H1 (cell line): ENCODE measurements at regions of chr5 and their contacts with region 1.

Region 1: DNA sequence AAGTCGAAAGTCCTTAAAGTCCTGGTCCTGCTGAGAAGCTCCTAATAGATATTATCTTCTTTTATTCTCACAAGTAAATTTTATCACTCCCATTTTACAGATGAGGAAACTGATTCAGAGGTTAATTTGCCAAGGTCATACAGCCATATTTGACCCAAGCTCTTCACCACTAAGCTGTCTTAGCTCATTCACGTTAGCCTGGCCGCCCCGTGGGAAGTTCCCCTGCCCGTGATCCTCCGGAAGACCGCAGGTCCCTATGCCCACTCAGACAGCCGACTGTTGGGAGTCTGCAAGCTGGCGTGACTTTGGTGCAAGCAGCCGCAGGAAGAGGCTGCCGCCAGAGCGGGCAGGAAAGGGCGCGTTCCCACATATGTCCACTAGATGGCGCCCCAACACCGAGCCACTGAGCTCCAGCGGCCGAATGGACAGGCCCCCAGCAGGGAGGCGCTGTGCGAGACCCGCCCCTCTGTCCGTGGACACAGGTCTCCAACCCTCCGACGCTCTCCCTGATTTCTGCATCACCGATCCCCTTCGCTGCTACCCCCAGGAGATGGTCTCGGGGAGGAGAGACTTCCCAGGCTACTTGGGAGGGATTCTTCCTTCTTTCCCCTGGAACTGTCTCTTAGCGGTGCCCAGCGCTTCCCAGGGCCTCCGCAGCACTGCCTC is 10.0 kb upstream of the ARAP3 start:
- DNase-seq: peak in 1 of 2 experiments; percentile 98
- H3K4me3 ChIP-seq: peak overlapping the region; percentile 19 to 60 (median 54); a peak in 7 of 8 replicates
- H3K27ac ChIP-seq: no peak overlapping the region
- H3K4me1 ChIP-seq: peaks cover 4 to 13% (median 9%) of the 10 kb centered on the region in 4 experiments
- H3K27me3 ChIP-seq: peaks cover 0 to 11% (median 2%) of the 10 kb centered on the region in 4 experiments; a peak in 2 of 7 replicates
- CTCF ChIP-seq: peak; percentile 95 to 99 (median 97)
- EP300 ChIP-seq: no peak
- POLR2A ChIP-seq: no peak
- RAD21 ChIP-seq: peak; percentile 98 to 99

Region 2: GRCh38 chr5:141208478-141208877 is 483.5 kb before region 1 on chr5 and contains the start of gene PCDHB12:
- CTCF ChIA-PET with region 1: no interaction called
- POLR2A ChIA-PET with region 1: no interaction called
- DNase-seq: no peak
- H3K4me3 ChIP-seq: peak within 1 kb of the TSS in 2 of 4 experiments; percentile 10 to 34; a peak in 2 of 8 replicates
- H3K27ac ChIP-seq: no peak within 1 kb of the TSS
- H3K4me1 ChIP-seq: no peaks in the 10 kb centered on the region
- H3K27me3 ChIP-seq: no peaks in the 10 kb centered on the region
- CTCF ChIP-seq: peak in 2 of 3 experiments; percentile 11 to 48; a peak in 3 of 4 replicates
- EP300 ChIP-seq: no peak
- POLR2A ChIP-seq: no peak
- RAD21 ChIP-seq: peak; percentile 42 to 45
- total RNA-seq, gene PCDHB12: 2.0 and 3.0 TPM in 2 replicates

Region 3: GRCh38 chr5:141664732-141665461 is 27.1 kb before region 1 on chr5:
- CTCF ChIA-PET with region 1: interaction called, 137 read pairs
- POLR2A ChIA-PET with region 1: interaction called, 3 read pairs
- DNase-seq: peak; percentile 66 to 94
- H3K4me3 ChIP-seq: no peak overlapping the region
- H3K27ac ChIP-seq: no peak overlapping the region
- H3K4me1 ChIP-seq: no peaks in the 10 kb centered on the region
- H3K27me3 ChIP-seq: no peaks in the 10 kb centered on the region
- CTCF ChIP-seq: peak; percentile 91 to 96 (median 91)
- EP300 ChIP-seq: no peak
- POLR2A ChIP-seq: no peak
- RAD21 ChIP-seq: peak; percentile 90 to 95

Region 4: DNA sequence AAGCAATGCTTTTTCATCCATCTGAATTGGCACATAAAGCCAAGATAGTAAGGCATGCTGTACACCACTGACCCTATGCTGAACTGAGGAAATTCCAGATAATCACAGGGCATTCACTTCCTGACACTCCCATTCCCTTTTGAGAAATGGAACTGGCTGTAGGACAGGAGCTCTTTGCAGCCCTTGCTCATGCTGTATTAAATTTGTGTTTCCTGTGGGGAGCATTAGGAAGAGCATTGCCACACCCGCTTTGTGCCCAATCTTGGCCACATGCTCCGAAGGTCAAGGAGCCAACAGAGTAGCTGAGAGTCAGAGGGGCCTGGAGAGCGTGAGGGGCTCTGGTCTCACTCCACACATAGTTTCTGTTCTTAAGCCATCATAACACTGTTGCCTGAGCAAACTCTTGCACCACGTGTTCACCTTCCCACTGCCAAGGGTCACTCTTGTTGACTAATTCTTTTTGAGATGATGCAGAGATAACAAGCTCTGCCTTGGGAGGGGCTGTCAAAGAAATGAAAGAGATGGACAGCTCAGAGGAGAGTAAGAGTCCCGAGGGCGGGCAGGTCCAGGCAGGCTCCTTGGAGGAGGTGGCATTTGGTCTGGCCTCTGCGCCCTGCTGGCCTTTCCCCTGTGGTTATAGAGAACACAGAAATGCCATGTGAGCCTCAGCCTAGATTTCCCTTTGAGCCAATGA is 21.8 kb after region 1 on chr5:
- CTCF ChIA-PET with region 1: interaction called, 25 read pairs
- POLR2A ChIA-PET with region 1: no interaction called
- DNase-seq: no peak
- H3K4me3 ChIP-seq: no peak overlapping the region
- H3K27ac ChIP-seq: no peak overlapping the region
- H3K4me1 ChIP-seq: peaks cover 3 to 20% (median 11%) of the 10 kb centered on the region in 4 experiments
- H3K27me3 ChIP-seq: no peaks in the 10 kb centered on the region
- CTCF ChIP-seq: no peak
- EP300 ChIP-seq: no peak
- POLR2A ChIP-seq: no peak
- RAD21 ChIP-seq: no peak

Region 5: DNA sequence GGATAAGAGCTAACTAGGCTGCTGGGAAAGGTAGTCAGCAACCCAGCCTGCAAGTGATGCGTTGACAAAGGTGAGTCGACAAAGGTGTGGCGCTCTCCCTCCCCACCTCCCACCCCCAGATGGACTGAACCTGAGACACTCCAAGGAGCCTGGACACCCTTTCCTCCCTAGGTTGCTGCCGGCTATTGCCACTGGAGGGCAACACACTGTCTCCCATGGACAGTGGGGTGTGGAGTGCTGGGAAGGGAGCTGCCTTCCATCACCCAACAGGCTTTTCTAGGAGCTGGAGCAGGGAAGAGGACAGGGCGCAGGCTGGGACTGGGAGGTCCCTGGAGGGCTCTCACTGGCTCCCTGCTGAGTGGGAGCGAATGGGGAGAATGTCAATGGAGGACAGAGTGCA is 65.4 kb after region 1 on chr5:
- CTCF ChIA-PET with region 1: interaction called, 98 read pairs
- POLR2A ChIA-PET with region 1: interaction called, 6 read pairs
- DNase-seq: peak in 1 of 2 experiments; percentile 29
- H3K4me3 ChIP-seq: no peak overlapping the region
- H3K27ac ChIP-seq: no peak overlapping the region
- H3K4me1 ChIP-seq: peaks cover 17 to 30% (median 26%) of the 10 kb centered on the region in 4 experiments
- H3K27me3 ChIP-seq: peaks cover 9 to 22% (median 18%) of the 10 kb centered on the region in 4 experiments
- CTCF ChIP-seq: peak in 2 of 3 experiments; percentile 78 to 79; a peak in 3 of 4 replicates
- EP300 ChIP-seq: no peak
- POLR2A ChIP-seq: no peak
- RAD21 ChIP-seq: peak; percentile 76 to 86

Region 6: DNA sequence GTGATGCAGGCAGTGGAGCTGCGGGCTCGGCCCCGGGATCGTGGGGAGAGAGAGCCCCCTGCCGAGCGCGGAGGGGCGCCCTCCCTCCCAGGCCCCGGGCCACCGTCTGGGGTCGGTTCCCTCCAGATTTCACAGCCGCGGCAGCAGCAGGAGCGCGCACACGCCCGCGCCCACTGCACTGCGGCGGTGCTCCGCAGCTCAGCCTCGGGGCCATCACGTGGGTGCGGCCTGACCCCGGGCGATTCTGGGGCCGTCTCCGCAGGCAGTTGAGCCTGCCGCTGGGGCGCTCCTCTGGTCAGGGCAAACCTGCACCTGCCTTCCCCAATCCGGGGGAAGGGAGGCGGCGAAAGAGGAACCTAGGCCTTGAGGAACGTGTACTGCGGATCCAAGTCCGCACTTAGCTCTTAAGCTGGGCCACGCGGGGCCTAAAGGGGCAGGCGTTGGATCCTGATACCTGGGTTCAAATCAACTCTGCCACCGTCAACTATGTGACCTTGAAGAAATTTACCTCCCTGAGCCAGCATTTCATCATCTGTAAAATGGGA is 222.3 kb after region 1 on chr5:
- CTCF ChIA-PET with region 1: interaction called, 21 read pairs
- POLR2A ChIA-PET with region 1: no interaction called
- DNase-seq: peak in 1 of 2 experiments; percentile 77
- H3K4me3 ChIP-seq: peak overlapping the region; percentile 5 to 64 (median 47)
- H3K27ac ChIP-seq: no peak overlapping the region
- H3K4me1 ChIP-seq: peaks cover 4 to 10% (median 6%) of the 10 kb centered on the region in 4 experiments; a peak in 6 of 7 replicates
- H3K27me3 ChIP-seq: peaks cover 3 to 17% (median 7%) of the 10 kb centered on the region in 4 experiments
- CTCF ChIP-seq: peak in 2 of 3 experiments; percentile 12 to 13; a peak in 3 of 4 replicates
- EP300 ChIP-seq: 0 out of 3 replicates have a peak, but pooled peaks of 1 of the 2 experiments have one; percentile 21
- POLR2A ChIP-seq: peak in 1 of 2 experiments; percentile 50; a peak in 1 of 3 replicates
- RAD21 ChIP-seq: peak; percentile 36 to 45; a peak in 3 of 4 replicates

Region 7: DNA sequence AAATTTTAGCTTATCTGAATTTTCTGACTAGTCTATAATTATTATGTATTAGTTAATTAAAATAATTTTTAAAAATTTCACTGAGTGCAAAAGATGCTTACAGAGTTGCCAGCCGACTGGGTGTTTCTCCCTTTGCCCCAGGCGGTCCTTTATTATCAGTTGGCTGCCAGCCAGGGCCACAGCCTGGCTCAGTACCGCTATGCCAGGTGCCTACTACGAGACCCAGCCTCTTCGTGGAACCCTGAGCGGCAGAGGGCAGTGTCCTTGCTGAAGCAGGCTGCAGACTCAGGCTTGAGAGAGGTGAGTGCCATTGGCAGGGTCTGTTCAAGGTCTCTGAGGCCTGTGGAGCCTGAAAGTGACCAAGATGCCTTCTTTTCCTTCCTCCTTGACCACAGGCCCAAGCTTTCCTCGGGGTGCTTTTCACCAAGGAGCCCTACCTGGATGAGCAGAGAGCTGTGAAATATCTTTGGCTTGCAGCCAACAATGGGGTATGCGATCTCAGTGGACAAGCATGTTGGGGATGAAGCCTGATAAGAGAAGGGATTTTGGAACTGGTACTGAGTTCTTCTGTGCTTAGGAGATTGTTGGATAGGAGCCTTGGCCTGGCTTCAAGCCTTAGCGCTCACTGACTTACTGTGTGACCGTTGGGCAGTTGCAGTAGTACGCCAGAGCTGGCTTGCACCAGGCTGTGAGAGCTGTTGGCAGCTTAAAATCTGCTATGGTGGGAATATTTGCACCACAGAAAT is 242.3 kb after region 1 on chr5:
- CTCF ChIA-PET with region 1: interaction called, 10 read pairs
- POLR2A ChIA-PET with region 1: no interaction called
- DNase-seq: no peak
- H3K4me3 ChIP-seq: no peak overlapping the region
- H3K27ac ChIP-seq: no peak overlapping the region
- H3K4me1 ChIP-seq: no peaks in the 10 kb centered on the region
- H3K27me3 ChIP-seq: no peaks in the 10 kb centered on the region
- CTCF ChIP-seq: no peak
- EP300 ChIP-seq: no peak
- POLR2A ChIP-seq: no peak
- RAD21 ChIP-seq: no peak

Region 8: GRCh38 chr5:141951332-141951781 is 259.4 kb after region 1 on chr5:
- CTCF ChIA-PET with region 1: interaction called, 116 read pairs
- POLR2A ChIA-PET with region 1: no interaction called
- DNase-seq: peak; percentile 50 to 82
- H3K4me3 ChIP-seq: no peak overlapping the region
- H3K27ac ChIP-seq: no peak overlapping the region
- H3K4me1 ChIP-seq: peaks cover 0 to 3% (median under 1%) of the 10 kb centered on the region in 4 experiments; a peak in 3 of 7 replicates
- H3K27me3 ChIP-seq: no peaks in the 10 kb centered on the region; a peak in 1 of 7 replicates
- CTCF ChIP-seq: peak; percentile 80 to 98 (median 93)
- EP300 ChIP-seq: no peak
- POLR2A ChIP-seq: no peak
- RAD21 ChIP-seq: peak; percentile 45 to 63